Activated T-helper 1 cell treated with anti-CD3 and anti-CD28 coated beads, Interleukin-12 subunit alpha, Interleukin-12 subunit beta, Interleukin-2, Interleukin-4 antibody, amounts not matched to agents 30 ng/mL and 10 ng/mL and 1 ng/mL, durations not matched to agents 14 hours and 24 hours and 36 hours (primary cell): ENCODE measurements at regions of chr12 and their contacts with region 1.

Region 1: GRCh38 chr12:92570056-92570753 is 132.6 kb upstream of the PLEKHG7 start:
- DNase-seq: peak; percentile 36
- H3K4me3 Mint-ChIP-seq: no peak overlapping the region
- H3K27ac Mint-ChIP-seq: no peak overlapping the region
- H3K4me1 Mint-ChIP-seq: peaks cover 49% of the 10 kb centered on the region
- H3K27me3 Mint-ChIP-seq: no peaks in the 10 kb centered on the region

Region 2: GRCh38 chr12:91577586-91578539 is 992.3 kb before region 1 on chr12:
- intact Hi-C with region 1: loop called (anchors 2 kb)
- DNase-seq: no peak
- H3K4me3 Mint-ChIP-seq: peak overlapping the region; percentile 62
- H3K27ac Mint-ChIP-seq: no peak overlapping the region
- H3K4me1 Mint-ChIP-seq: peaks cover 6% of the 10 kb centered on the region
- H3K27me3 Mint-ChIP-seq: peaks cover 15% of the 10 kb centered on the region

Region 3: DNA sequence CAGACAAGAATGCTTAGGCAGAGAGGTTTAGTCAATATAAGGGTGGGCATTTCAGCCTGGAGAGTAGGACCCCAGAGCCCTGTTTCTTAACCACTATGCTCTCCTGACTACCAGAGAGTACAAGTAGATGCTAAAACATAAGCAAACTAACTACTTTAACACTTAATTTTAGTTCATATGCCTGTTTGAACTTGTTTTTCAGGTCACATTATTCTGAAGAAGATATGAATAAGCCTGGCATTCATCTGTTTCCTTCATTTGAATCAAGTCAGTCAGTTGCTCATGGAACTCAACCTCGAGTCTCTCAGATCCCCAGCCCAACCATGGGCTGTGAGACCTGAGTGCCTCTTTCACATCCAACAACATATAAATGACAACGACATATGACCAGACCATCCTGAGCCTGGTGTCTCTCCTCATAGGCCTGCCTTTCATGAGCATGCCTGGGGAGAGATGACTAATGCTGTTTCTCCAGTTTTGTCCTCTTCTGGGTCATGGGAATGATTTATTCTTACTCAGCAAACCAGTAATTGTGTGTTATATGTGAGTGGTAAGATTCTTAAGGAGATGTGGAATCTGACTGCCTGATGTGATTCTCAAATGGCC is 173.5 kb before region 1 on chr12:
- intact Hi-C with region 1: loop called (anchors 1 kb)
- DNase-seq: no peak
- H3K4me3 Mint-ChIP-seq: no peak overlapping the region
- H3K27ac Mint-ChIP-seq: no peak overlapping the region
- H3K4me1 Mint-ChIP-seq: peaks cover 75% of the 10 kb centered on the region
- H3K27me3 Mint-ChIP-seq: no peaks in the 10 kb centered on the region

Region 4: GRCh38 chr12:92539113-92539749 is 31.0 kb before region 1 on chr12:
- intact Hi-C with region 1: loop called (anchors 1 kb)
- DNase-seq: no peak
- H3K4me3 Mint-ChIP-seq: peak overlapping the region; percentile 74
- H3K27ac Mint-ChIP-seq: peak overlapping the region; percentile 97
- H3K4me1 Mint-ChIP-seq: peaks cover 81% of the 10 kb centered on the region
- H3K27me3 Mint-ChIP-seq: no peaks in the 10 kb centered on the region

Region 5: GRCh38 chr12:92582475-92582874 is 12.3 kb after region 1 on chr12:
- intact Hi-C with region 1: no loop called
- DNase-seq: no peak
- H3K4me3 Mint-ChIP-seq: no peak overlapping the region
- H3K27ac Mint-ChIP-seq: no peak overlapping the region
- H3K4me1 Mint-ChIP-seq: no peaks in the 10 kb centered on the region
- H3K27me3 Mint-ChIP-seq: no peaks in the 10 kb centered on the region

Region 6: DNA sequence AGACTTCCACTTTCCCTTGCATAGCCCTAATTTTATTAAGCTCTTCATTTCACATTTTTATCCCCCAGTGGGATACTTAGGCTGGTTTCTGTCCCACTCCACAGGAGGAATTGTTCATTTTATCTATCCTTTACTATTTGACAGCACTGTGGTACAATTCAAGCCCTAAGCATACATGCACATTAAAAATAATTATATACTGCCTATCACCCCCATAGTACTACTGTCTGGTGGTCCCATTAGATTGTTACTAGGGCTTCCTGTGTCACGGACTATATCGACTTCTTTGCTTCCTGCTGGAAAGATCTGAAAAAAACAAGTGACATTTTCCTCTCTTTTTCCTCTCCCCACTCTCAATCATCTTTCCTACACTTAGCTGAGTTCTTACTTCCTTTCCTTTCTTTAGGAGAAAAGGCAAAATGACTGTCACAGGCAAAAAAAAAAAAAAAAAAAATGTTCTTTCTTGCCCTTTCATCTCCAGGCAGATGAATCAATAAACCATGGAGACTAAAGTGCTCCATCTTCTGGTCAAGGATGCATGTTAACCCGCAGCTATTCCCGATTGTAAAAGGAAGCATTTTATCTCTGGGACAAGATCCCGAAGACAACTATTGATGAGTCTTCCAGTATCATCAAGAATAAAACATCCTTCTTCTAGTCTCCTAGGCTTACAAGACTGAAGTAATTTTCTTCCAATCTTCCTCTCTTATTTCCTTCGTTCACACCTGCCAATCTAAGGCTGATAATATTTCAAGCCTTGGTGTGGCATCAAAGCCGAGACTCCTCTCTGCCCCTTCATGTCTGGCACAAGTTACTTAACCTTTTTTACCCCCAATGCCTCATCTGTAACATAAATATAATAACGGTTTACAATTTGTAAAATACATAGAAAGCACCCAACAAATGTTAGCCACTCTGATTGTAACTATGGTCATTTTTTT is 38.2 kb after region 1 on chr12:
- intact Hi-C with region 1: loop called (anchors 5 kb)
- DNase-seq: no peak
- H3K4me3 Mint-ChIP-seq: no peak overlapping the region
- H3K27ac Mint-ChIP-seq: peak overlapping the region; percentile 59
- H3K4me1 Mint-ChIP-seq: peaks cover 26% of the 10 kb centered on the region
- H3K27me3 Mint-ChIP-seq: no peaks in the 10 kb centered on the region